Activated B cell treated with CpG ODN at 0.5 μM for 24 hours (primary cell): ENCODE measurements at regions of chrX and their contacts with region 1.

Region 1: GRCh38 chrX:153971450-153972367 is at the start of gene HCFC1:
- DNase-seq: peak; percentile 81
- ATAC-seq: peak; percentile 48
- H3K4me3 Mint-ChIP-seq: peak within 1 kb of the TSS; percentile 100
- H3K27ac Mint-ChIP-seq: peak within 1 kb of the TSS; percentile 100
- H3K4me1 Mint-ChIP-seq: peaks cover 44% of the 10 kb centered on the region
- H3K27me3 Mint-ChIP-seq: no peaks in the 10 kb centered on the region
- CTCF ChIP-seq: no peak
- total RNA-seq, gene HCFC1: 72.5 and 79.4 TPM in 2 replicates

Region 2: DNA sequence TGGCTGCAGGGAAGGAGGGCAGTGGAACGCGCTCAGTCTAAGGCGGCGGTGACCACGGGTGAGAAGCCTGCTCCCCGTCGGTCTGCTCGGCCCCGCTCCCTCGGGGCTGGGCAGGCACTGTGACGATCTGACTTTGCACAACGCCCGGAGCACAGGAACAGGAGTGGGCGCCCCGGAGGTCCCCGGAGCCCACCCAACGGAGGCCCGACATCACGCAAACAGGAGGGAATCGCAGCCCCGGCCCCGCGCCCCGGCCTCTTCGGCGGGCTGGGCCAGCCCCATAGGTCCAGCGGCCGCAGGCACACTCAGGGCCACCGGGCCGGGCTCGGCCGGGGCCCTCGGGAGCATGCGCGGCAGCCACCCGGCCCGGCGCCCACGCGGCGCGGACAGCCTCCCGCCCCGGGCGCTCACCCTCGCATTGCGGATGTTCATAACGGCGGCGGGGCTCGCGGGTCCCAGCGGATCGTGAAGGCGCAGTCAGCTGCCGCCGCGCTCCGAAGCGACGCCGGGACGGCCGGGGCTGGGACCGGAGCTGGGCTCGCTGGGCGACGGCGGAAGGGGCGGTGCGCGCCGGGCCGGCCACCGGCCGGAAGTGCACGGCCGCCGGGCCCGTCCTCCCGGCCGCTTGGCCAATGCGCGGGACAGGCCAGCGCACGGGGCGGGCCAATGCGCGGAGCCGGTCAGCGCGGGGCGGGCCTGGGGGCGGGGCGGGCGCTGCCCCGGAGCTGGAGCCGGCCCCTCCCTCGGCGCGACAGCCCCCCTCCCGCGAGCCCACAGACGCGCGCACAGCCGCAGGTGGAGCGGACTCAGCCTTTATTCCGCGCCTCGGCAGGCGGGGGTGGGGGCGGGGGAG is 37.0 kb before region 1 on chrX and contains the start of gene NAA10:
- CTCF ChIA-PET with region 1: no interaction called
- POLR2A ChIA-PET with region 1: interaction called, 11 read pairs
- intact Hi-C with region 1: no loop called
- DNase-seq: peak; percentile 62
- ATAC-seq: peak; percentile 93
- H3K4me3 Mint-ChIP-seq: peak within 1 kb of the TSS; percentile 84
- H3K27ac Mint-ChIP-seq: peak within 1 kb of the TSS; percentile 46
- H3K4me1 Mint-ChIP-seq: peaks cover 24% of the 10 kb centered on the region
- H3K27me3 Mint-ChIP-seq: no peaks in the 10 kb centered on the region
- CTCF ChIP-seq: no peak
- total RNA-seq, gene NAA10: 94.8 and 109 TPM in 2 replicates

Region 3: DNA sequence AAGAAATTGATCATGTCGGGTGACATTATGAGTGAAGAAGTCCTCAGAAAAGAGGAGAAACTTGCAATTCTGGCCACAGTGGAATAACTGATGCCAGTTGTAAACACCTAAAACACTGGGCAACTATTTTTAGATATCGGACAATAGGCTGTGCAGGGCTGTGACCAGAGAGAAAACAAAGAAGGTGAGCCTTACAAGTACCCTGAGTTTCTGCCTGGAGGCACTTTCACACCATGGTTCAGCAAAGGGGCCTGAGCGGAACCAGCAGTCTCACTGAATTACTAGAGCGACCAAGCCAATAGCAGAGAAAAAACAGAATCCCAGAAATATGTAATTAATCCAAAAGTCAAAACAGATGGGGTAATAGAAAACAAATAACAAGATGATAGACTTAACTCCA is 36.8 kb after region 1 on chrX:
- CTCF ChIA-PET with region 1: interaction called, 6 read pairs
- POLR2A ChIA-PET with region 1: interaction called, 17 read pairs
- intact Hi-C with region 1: loop called (anchors 2 kb)
- DNase-seq: no peak
- ATAC-seq: no peak
- H3K4me3 Mint-ChIP-seq: peak overlapping the region; percentile 73
- H3K27ac Mint-ChIP-seq: peak overlapping the region; percentile 96
- H3K4me1 Mint-ChIP-seq: peaks cover 59% of the 10 kb centered on the region
- H3K27me3 Mint-ChIP-seq: no peaks in the 10 kb centered on the region
- CTCF ChIP-seq: no peak

Region 4: DNA sequence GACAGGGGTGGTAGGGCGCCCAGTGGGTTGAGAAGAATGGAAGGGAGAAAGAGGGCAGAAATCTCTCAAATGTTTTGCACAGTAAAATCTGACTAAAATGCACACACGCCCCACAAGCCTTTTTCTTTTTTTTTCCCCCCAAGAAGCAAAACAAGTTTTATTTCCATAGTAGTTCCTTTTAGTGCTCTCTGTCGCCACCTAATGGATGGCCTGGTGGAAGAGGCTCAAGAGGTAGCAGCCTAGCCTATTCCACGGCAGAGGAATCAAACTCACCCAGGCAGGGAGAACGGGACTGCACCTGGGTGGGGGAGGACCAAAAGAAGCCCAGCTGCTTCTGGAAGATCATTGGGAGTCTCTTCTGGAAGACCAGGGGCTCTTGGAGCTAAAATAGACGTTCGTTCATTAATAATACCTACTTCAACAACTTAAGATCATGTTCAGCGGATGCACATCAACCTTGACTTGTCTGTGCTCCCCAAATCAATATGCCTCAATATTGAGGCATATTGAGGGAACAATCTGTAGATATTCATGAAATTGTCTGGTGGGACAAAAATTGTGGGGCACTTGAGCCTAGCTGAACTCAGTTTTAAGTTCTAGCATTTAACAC is 79.6 kb after region 1 on chrX:
- CTCF ChIA-PET with region 1: no interaction called
- POLR2A ChIA-PET with region 1: no interaction called
- intact Hi-C with region 1: loop called (anchors 1 kb)
- DNase-seq: peak; percentile 24
- ATAC-seq: peak; percentile 73
- H3K4me3 Mint-ChIP-seq: no peak overlapping the region
- H3K27ac Mint-ChIP-seq: no peak overlapping the region
- H3K4me1 Mint-ChIP-seq: peaks cover 10% of the 10 kb centered on the region
- H3K27me3 Mint-ChIP-seq: no peaks in the 10 kb centered on the region
- CTCF ChIP-seq: no peak

Region 5: GRCh38 chrX:154378782-154379591 is 407.3 kb after region 1 on chrX and contains the start of gene EMD:
- CTCF ChIA-PET with region 1: no interaction called
- POLR2A ChIA-PET with region 1: interaction called, 4 read pairs
- intact Hi-C with region 1: loop called (anchors 1 kb)
- DNase-seq: peak; percentile 87
- ATAC-seq: peak; percentile 83
- H3K4me3 Mint-ChIP-seq: peak within 1 kb of the TSS; percentile 83
- H3K27ac Mint-ChIP-seq: peak within 1 kb of the TSS; percentile 83
- H3K4me1 Mint-ChIP-seq: peaks cover 18% of the 10 kb centered on the region
- H3K27me3 Mint-ChIP-seq: no peaks in the 10 kb centered on the region
- CTCF ChIP-seq: no peak
- total RNA-seq, gene EMD: 68.4 and 70.2 TPM in 2 replicates